Activated CD8-positive, alpha-beta T cell treated with anti-CD3 and anti-CD28 coated beads for 36 hours (primary cell): ENCODE measurements at regions of chr2 and their contacts with region 1.

Region 1: DNA sequence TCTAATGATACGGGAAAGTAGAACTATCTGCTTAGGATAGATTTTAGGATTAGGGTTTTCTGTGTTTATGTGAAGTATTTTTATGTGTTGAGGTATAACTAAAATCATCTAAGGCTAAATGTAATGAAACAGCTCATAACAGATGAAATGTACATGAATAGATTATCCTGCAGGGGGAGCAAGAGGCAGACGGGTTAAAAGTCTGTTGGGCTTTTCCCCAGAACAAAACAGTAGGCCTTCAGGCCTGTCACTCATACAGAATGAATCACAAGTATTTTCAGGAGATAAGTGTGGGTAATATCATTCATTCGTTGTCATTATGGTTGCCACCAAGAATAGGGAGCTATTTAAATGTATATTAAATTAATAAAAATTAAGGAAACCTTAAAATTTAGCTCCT is 107.9 kb upstream of the IL1R2 start:
- DNase-seq: peak; percentile 48
- ATAC-seq: peak; percentile 97
- H3K4me3 Mint-ChIP-seq: no peak overlapping the region
- H3K27ac Mint-ChIP-seq: no peak overlapping the region
- H3K4me1 Mint-ChIP-seq: peaks cover 7% of the 10 kb centered on the region
- H3K27me3 Mint-ChIP-seq: no peaks in the 10 kb centered on the region
- CTCF ChIP-seq: peak; percentile 58

Region 2: DNA sequence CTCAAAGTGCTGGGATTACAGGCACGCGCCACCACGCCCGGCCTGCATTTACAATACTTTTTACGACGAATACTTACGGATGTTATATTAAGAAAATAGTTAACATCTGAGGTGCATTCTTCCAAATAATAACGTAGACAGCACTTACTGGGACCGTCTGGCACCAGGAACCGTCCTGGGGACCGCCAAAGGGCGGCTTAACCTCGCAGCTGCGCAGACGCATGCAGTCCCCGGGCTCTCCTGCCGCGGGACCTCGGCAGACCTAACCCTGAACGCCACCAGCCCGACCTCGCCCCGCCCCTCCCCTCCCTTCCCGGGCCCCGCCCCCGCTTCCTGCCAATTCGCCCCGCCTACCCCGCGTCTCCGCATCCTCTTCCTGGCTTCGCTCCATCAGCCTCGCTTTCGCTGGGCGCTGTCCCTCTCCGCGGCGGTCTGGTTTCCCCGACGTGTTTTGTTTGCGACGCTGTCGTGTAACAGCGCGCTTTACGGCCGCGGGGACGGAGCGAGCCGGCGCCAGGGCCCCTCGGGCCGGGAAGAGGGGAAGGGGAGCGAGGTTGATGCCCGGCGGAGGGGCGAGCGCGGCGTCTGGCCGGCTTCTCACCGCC is 631.4 kb before region 1 on chr2 and contains the start of gene CNOT11:
- CTCF ChIA-PET with region 1: no interaction called
- POLR2A ChIA-PET with region 1: no interaction called
- intact Hi-C with region 1: no loop called
- DNase-seq: peak; percentile 99
- ATAC-seq: peak; percentile 89
- H3K4me3 Mint-ChIP-seq: peak within 1 kb of the TSS; percentile 88
- H3K27ac Mint-ChIP-seq: peak within 1 kb of the TSS; percentile 91
- H3K4me1 Mint-ChIP-seq: peaks cover 40% of the 10 kb centered on the region
- H3K27me3 Mint-ChIP-seq: no peaks in the 10 kb centered on the region
- CTCF ChIP-seq: no peak
- total RNA-seq, gene CNOT11: 56.7 to 59.7 TPM

Region 3: DNA sequence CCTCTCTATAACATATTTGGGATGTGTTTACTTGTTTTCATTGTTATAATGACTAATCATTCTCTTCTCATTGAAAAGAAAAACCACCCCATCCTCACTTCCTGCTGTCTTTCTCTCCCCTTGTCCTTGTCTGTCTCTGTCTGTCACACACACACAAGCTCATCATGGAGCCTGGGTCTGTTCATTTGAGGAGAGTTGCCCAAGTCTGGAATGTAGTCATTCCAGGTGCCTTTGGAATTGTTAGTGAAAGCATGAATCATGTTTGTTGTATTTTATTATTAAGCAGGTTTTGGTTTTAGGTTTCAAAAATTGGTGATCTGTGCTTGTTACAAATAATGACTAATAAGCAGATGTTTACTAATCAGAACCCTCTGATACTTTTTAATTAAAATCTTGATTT is 25.6 kb before region 1 on chr2:
- CTCF ChIA-PET with region 1: interaction called, 14 read pairs
- POLR2A ChIA-PET with region 1: no interaction called
- intact Hi-C with region 1: no loop called
- DNase-seq: no peak
- ATAC-seq: no peak
- H3K4me3 Mint-ChIP-seq: no peak overlapping the region
- H3K27ac Mint-ChIP-seq: no peak overlapping the region
- H3K4me1 Mint-ChIP-seq: peaks cover 5% of the 10 kb centered on the region
- H3K27me3 Mint-ChIP-seq: no peaks in the 10 kb centered on the region
- CTCF ChIP-seq: no peak

Region 4: DNA sequence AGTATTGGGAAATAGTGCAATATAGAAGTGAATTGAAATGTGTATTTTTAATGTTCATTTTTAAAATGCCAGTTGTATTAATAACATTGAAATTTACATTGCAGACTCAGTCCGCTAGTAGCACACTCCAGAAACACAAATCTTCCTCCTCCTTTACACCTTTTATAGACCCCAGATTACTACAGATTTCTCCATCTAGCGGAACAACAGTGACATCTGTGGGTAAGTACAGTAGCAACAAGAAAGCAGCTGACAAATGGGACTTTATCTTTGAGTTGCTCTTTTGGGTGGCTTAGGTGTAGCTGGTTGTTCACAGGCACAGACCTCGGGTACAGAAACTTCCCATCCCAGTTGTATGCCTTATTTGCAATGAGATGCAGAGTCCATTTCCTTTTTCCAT is 10.3 kb before region 1 on chr2:
- CTCF ChIA-PET with region 1: interaction called, 28 read pairs
- POLR2A ChIA-PET with region 1: no interaction called
- intact Hi-C with region 1: no loop called
- DNase-seq: peak; percentile 10
- ATAC-seq: no peak
- H3K4me3 Mint-ChIP-seq: no peak overlapping the region
- H3K27ac Mint-ChIP-seq: no peak overlapping the region
- H3K4me1 Mint-ChIP-seq: no peaks in the 10 kb centered on the region
- H3K27me3 Mint-ChIP-seq: no peaks in the 10 kb centered on the region
- CTCF ChIP-seq: no peak

Region 5: GRCh38 chr2:101986804-101987740 is 103.2 kb after region 1 on chr2:
- CTCF ChIA-PET with region 1: interaction called, 11 read pairs
- POLR2A ChIA-PET with region 1: no interaction called
- intact Hi-C with region 1: loop called (anchors 10 kb)
- DNase-seq: peak; percentile 18
- ATAC-seq: peak; percentile 68
- H3K4me3 Mint-ChIP-seq: no peak overlapping the region
- H3K27ac Mint-ChIP-seq: no peak overlapping the region
- H3K4me1 Mint-ChIP-seq: peaks cover 17% of the 10 kb centered on the region
- H3K27me3 Mint-ChIP-seq: peaks cover 4% of the 10 kb centered on the region
- CTCF ChIP-seq: no peak

Region 6: GRCh38 chr2:102005989-102006885 is 122.4 kb after region 1 on chr2:
- CTCF ChIA-PET with region 1: interaction called, 22 read pairs
- POLR2A ChIA-PET with region 1: no interaction called
- intact Hi-C with region 1: no loop called
- DNase-seq: peak; percentile 54
- ATAC-seq: peak; percentile 65
- H3K4me3 Mint-ChIP-seq: no peak overlapping the region
- H3K27ac Mint-ChIP-seq: no peak overlapping the region
- H3K4me1 Mint-ChIP-seq: peaks cover 14% of the 10 kb centered on the region
- H3K27me3 Mint-ChIP-seq: no peaks in the 10 kb centered on the region
- CTCF ChIP-seq: peak; percentile 64

Region 7: DNA sequence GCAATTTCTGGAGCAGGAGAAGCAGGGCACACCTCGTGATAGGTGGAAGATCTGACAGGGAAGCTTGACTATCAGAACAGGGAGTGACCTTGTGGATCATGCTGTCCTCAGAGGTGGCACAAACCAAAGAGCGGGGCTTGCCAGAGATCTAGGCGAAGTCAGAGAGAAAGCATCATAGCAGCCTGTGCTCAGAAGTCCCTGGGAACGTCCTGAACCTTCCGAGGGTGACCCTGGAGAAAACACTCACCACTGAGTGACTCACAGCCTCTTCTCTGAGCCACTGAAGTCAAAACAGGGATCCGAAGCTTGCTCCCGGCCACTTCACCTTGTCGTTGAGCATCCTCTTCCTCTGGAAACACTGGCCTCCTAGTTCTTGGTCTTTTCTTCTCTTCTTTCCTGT is 164.6 kb after region 1 on chr2:
- CTCF ChIA-PET with region 1: no interaction called
- POLR2A ChIA-PET with region 1: no interaction called
- intact Hi-C with region 1: no loop called
- DNase-seq: no peak
- ATAC-seq: no peak
- H3K4me3 Mint-ChIP-seq: no peak overlapping the region
- H3K27ac Mint-ChIP-seq: no peak overlapping the region
- H3K4me1 Mint-ChIP-seq: peaks cover 6% of the 10 kb centered on the region
- H3K27me3 Mint-ChIP-seq: peaks cover 11% of the 10 kb centered on the region
- CTCF ChIP-seq: no peak